B cell (primary cell): ENCODE measurements at regions of chr17 and their contacts with region 1.

Region 1: GRCh38 chr17:17723354-17724261 is 42.4 kb downstream of the RAI1 start:
- DNase-seq: peak; percentile 55
- ATAC-seq: peak; percentile 37
- H3K4me3 ChIP-seq: peak overlapping the region; percentile 14 to 73 (median 56)
- H3K4me3 Mint-ChIP-seq: peak overlapping the region; percentile 94
- H3K27ac ChIP-seq: no peak overlapping the region
- H3K27ac Mint-ChIP-seq: peak overlapping the region; percentile 70
- H3K4me1 ChIP-seq: peaks cover 19 to 37% of the 10 kb centered on the region in 2 donors
- H3K4me1 Mint-ChIP-seq: peaks cover 41% of the 10 kb centered on the region
- H3K27me3 ChIP-seq: peaks cover 0 to 24% (median 9%) of the 10 kb centered on the region in 4 experiments
- H3K27me3 Mint-ChIP-seq: peaks cover 29% of the 10 kb centered on the region
- CTCF ChIP-seq: no peak

Region 2: GRCh38 chr17:17739388-17740066 is 15.9 kb after region 1 on chr17:
- CTCF ChIA-PET with region 1: interaction called, 3 read pairs
- POLR2A ChIA-PET with region 1: no interaction called
- intact Hi-C with region 1: loop called (anchors 2 kb)
- DNase-seq: no peak
- ATAC-seq: no peak
- H3K4me3 ChIP-seq: no peak overlapping the region
- H3K4me3 Mint-ChIP-seq: no peak overlapping the region
- H3K27ac ChIP-seq: no peak overlapping the region
- H3K27ac Mint-ChIP-seq: peak overlapping the region; percentile 26
- H3K4me1 ChIP-seq: peaks cover 26 to 42% of the 10 kb centered on the region in 2 donors
- H3K4me1 Mint-ChIP-seq: peaks cover 42% of the 10 kb centered on the region
- H3K27me3 ChIP-seq: no peaks in the 10 kb centered on the region
- H3K27me3 Mint-ChIP-seq: no peaks in the 10 kb centered on the region
- CTCF ChIP-seq: no peak